ENCODE measurements at regions of chr7 and their contacts with region 1.

Region 1: DNA sequence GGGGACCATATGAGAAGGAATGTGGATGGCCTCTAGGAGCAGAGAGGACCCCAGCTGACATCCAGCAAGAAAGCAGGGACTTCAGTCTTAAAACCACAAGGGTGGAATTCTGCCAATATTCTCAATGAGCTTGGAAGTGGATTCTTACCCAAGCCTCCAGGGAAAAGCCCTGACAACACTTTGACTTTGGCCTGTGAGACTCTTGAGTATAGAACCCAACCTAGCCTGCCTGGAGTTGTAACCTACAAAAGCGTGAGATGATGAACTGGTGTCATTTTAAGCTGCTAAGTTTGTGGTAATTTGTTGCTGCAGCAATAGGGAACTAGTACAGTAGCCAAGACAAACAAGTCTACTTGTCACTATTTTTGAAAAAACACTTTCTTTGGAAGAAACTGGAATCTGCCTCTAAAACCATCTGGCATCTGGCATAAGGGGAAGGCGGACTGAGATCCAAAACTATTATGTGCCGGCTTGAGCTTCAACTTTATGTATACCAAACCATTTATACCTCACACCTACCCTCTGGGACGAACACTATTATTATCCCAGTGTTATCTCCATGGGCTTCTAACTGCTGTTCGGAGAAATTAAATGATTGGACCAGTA is 82.8 kb downstream of the C1GALT1 start:
- DNase-seq: no peak
- ATAC-seq: no peak
- H3K4me3 ChIP-seq: no peak overlapping the region
- H3K27ac ChIP-seq: no peak overlapping the region
- H3K4me1 ChIP-seq: no peaks in the 10 kb centered on the region
- H3K27me3 ChIP-seq: no peaks in the 10 kb centered on the region
- CTCF ChIP-seq: no peak
- POLR2A ChIP-seq: no peak

Region 2: DNA sequence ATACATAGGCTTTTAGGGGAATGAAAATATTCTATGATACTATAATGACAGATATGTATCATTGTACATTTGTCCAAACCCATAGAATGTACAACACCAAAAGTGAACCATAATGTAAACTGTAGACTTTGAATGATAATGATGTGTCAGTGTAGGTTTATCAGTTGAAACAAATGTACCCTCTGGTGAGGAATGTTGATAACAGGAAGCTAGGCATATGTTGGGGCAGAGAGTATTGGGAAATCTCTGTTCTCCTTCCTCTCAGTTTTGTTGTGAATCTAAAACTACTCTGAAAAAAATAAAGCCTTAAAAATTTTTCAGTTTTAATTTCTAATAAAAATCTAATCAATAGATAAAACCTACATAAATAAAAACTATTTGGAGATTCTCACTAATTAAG is 46.0 kb before region 1 on chr7:
- in situ Hi-C with region 1: no loop called
- intact Hi-C with region 1: no loop called
- DNase-seq: no peak
- ATAC-seq: no peak
- H3K4me3 ChIP-seq: no peak overlapping the region
- H3K27ac ChIP-seq: no peak overlapping the region
- H3K4me1 ChIP-seq: peaks cover 0 to 5% of the 10 kb centered on the region in 2 donors
- H3K27me3 ChIP-seq: no peaks in the 10 kb centered on the region
- CTCF ChIP-seq: no peak
- POLR2A ChIP-seq: no peak

Region 3: DNA sequence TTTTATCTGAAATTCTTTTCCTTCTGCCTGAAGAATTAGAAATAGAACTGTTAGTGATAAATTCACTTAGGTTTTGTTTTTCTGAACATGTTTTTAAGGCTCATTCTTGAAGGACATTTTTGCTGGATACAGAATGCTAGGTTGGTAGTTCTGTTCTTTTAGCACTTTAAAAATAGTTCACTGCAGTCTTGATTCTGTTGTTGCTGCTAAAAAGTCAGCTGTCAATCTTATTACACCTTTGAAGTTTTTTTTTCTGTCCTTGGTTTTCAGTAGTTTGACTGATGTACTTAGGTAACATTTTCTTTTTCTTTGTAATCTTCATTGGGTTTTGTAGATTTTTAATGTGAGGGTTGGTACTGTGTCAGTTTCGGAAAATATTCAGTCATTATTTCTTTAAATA is 34.2 kb before region 1 on chr7:
- in situ Hi-C with region 1: no loop called
- intact Hi-C with region 1: loop called (anchors 2 kb)
- DNase-seq: no peak
- ATAC-seq: no peak
- H3K4me3 ChIP-seq: no peak overlapping the region
- H3K27ac ChIP-seq: no peak overlapping the region
- H3K4me1 ChIP-seq: no peaks in the 10 kb centered on the region
- H3K27me3 ChIP-seq: no peaks in the 10 kb centered on the region
- CTCF ChIP-seq: no peak
- POLR2A ChIP-seq: no peak

Region 4: DNA sequence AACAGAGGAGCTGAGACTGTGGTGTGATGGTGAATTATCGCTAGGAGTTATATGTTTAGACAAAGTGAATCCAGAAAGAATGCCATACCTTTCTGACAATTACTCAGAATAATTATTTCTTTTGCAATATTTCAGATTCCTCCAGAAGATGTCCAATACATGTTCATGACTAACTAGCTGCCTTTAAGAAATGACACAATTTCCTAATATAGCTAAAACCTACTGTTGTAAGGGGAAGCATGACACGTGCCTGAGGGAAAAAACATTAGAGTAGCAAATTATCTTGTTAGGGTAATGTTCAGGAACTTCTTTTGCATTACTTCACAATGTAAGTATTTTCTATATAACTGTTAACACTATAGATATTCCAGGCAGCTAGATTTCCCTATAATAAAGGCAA is 120.2 kb after region 1 on chr7:
- in situ Hi-C with region 1: no loop called
- intact Hi-C with region 1: no loop called
- DNase-seq: no peak
- ATAC-seq: no peak
- H3K4me3 ChIP-seq: no peak overlapping the region
- H3K27ac ChIP-seq: no peak overlapping the region
- H3K4me1 ChIP-seq: no peaks in the 10 kb centered on the region
- H3K27me3 ChIP-seq: no peaks in the 10 kb centered on the region
- CTCF ChIP-seq: no peak
- POLR2A ChIP-seq: no peak